CD4-positive, alpha-beta memory T cell (primary cell): ENCODE measurements at regions of chr6 and their contacts with region 1.

Region 1: DNA sequence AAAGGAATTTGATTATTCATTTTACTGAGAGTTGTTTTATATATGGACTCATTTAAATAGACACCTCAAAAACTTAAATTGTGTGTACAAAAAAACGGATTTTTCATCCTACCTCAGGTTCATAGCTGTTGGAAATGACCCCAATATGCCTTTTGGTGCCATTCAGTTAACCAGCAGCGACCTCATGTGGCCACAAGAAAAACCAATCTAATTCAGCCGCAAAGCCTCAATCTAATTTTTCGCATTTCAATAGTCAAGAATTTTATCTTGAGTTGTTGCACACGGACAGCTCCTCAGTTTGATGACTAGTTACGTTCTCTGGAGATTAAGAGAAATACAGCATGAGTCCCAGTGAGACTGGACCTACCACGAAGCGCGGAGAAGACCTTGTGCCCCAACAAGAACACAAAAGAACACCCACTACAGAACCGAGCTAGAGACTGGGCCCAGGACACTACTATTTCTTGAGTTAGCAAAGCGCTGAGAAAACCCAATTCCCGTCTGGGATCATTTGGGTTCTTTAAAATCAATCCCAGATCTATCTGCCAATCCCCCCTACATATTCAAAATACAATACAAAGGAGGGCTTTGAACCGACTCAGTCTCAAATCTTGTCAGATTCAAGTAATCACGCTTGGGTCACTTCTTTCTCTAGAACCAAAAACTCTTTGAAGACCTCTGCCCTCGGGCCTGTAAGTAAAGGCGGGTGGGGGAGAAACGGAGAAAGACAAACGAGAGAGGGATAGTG is 1.1 kb downstream of the TCP11 start:
- DNase-seq: peak in 4 of 5 donors; percentile 36 to 44 (median 37)
- H3K4me3 ChIP-seq: no peak overlapping the region
- H3K4me3 Mint-ChIP-seq: peak overlapping the region in 7 of 8 donors; percentile 13 to 82 (median 49)
- H3K27ac ChIP-seq: no peak overlapping the region
- H3K27ac Mint-ChIP-seq: peak overlapping the region in 2 of 7 donors; percentile 43 to 63
- H3K4me1 ChIP-seq: peaks cover 15% of the 10 kb centered on the region
- H3K4me1 Mint-ChIP-seq: peaks cover 8 to 14% (median 10%) of the 10 kb centered on the region in 4 donors
- H3K27me3 ChIP-seq: peaks cover 7% of the 10 kb centered on the region
- H3K27me3 Mint-ChIP-seq: peaks cover 7 to 12% of the 10 kb centered on the region in 2 donors

Region 2: GRCh38 chr6:34526992-34527728 is 612.9 kb before region 1 on chr6:
- CTCF ChIA-PET with region 1: no interaction called
- POLR2A ChIA-PET with region 1: no interaction called
- intact Hi-C with region 1: loop called (anchors 1 kb)
- DNase-seq: peak; percentile 93 to 94 (median 93)
- H3K4me3 ChIP-seq: peak overlapping the region in 1 of 2 donors; percentile 20
- H3K4me3 Mint-ChIP-seq: peak overlapping the region in 6 of 8 donors; percentile 57 to 70 (median 64)
- H3K27ac ChIP-seq: no peak overlapping the region
- H3K27ac Mint-ChIP-seq: peak overlapping the region; percentile 27 to 78 (median 68)
- H3K4me1 ChIP-seq: peaks cover 15% of the 10 kb centered on the region
- H3K4me1 Mint-ChIP-seq: peaks cover 5 to 17% (median 7%) of the 10 kb centered on the region in 4 donors
- H3K27me3 ChIP-seq: no peaks in the 10 kb centered on the region
- H3K27me3 Mint-ChIP-seq: no peaks in the 10 kb centered on the region

Region 3: GRCh38 chr6:34867484-34867883 is 272.6 kb before region 1 on chr6:
- CTCF ChIA-PET with region 1: no interaction called
- POLR2A ChIA-PET with region 1: no interaction called
- intact Hi-C with region 1: loop called (anchors 10 kb)
- DNase-seq: no peak
- H3K4me3 ChIP-seq: no peak overlapping the region
- H3K4me3 Mint-ChIP-seq: no peak overlapping the region
- H3K27ac ChIP-seq: no peak overlapping the region
- H3K27ac Mint-ChIP-seq: no peak overlapping the region
- H3K4me1 ChIP-seq: no peaks in the 10 kb centered on the region
- H3K4me1 Mint-ChIP-seq: no peaks in the 10 kb centered on the region
- H3K27me3 ChIP-seq: no peaks in the 10 kb centered on the region
- H3K27me3 Mint-ChIP-seq: no peaks in the 10 kb centered on the region

Region 4: GRCh38 chr6:34953061-34954025 is 186.7 kb before region 1 on chr6:
- CTCF ChIA-PET with region 1: no interaction called
- POLR2A ChIA-PET with region 1: no interaction called
- intact Hi-C with region 1: no loop called
- DNase-seq: no peak
- H3K4me3 ChIP-seq: no peak overlapping the region
- H3K4me3 Mint-ChIP-seq: no peak overlapping the region
- H3K27ac ChIP-seq: no peak overlapping the region
- H3K27ac Mint-ChIP-seq: peak overlapping the region in 2 of 7 donors; percentile 4 to 14
- H3K4me1 ChIP-seq: no peaks in the 10 kb centered on the region
- H3K4me1 Mint-ChIP-seq: peaks cover 0 to 10% (median 6%) of the 10 kb centered on the region in 4 donors
- H3K27me3 ChIP-seq: no peaks in the 10 kb centered on the region
- H3K27me3 Mint-ChIP-seq: no peaks in the 10 kb centered on the region

Region 5: DNA sequence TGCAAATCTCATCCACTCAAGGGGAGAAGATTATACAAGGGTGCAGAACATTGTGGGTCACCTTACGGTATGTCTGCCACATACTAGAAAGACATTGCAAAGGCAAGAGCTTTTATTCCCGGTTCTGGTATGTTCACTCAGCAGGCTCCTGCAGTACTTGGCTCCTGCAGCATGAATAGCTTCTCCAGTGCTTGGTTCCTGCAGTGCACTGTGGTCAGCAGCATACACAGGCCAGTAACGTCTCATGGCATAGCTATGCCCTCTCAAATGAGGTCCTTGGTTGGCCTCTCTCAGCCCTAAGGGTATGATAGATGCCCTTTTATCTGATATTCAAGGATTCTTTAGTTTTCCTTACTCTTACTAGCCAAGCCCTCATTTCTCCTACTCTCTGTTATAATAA is 11.6 kb before region 1 on chr6:
- CTCF ChIA-PET with region 1: interaction called, 17 read pairs
- POLR2A ChIA-PET with region 1: no interaction called
- intact Hi-C with region 1: no loop called
- DNase-seq: no peak
- H3K4me3 ChIP-seq: no peak overlapping the region
- H3K4me3 Mint-ChIP-seq: no peak overlapping the region
- H3K27ac ChIP-seq: no peak overlapping the region
- H3K27ac Mint-ChIP-seq: no peak overlapping the region
- H3K4me1 ChIP-seq: no peaks in the 10 kb centered on the region
- H3K4me1 Mint-ChIP-seq: no peaks in the 10 kb centered on the region
- H3K27me3 ChIP-seq: no peaks in the 10 kb centered on the region
- H3K27me3 Mint-ChIP-seq: peaks cover 5 to 9% of the 10 kb centered on the region in 2 donors